Activated T-helper 2 cell treated with anti-CD3 and anti-CD28 coated beads, Interferon-gamma antibody, Interleukin-2, Interleukin-4, amounts not matched to agents 10 μg/mL and 5 μg/mL and 100 μg/mL, durations not matched to agents 14 hours and 24 hours and 36 hours (primary cell): ENCODE measurements at regions of chr12 and their contacts with region 1.

Region 1: DNA sequence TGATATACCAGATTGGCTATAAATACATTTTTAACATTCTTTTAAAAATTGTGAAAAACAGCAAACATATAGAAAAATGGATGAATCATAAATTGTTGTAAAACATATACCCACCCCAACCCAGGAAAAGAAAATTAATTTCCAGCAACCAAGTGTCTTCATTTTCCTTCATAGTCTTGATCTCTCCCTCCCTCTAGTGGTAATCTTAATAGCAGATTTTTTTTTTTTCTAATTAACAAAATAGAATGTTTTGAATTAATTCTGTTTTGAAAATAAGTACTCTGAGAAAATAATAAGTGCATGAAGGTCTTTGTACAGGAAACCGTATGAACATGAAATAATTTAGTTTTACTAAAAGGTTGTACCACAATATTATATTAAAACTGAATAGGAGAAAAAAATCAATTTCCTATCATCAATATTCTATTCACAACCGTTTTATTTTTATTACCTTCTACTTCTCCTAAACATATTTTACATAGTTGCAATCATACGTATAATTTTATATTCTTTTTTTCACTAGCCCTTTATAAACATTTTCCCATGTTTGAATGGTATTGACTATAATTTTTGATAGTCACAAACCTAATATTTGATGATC is 7.0 kb downstream of the ETNK1 start:
- DNase-seq: no peak
- H3K4me3 Mint-ChIP-seq: no peak overlapping the region
- H3K27ac Mint-ChIP-seq: no peak overlapping the region
- H3K4me1 Mint-ChIP-seq: peaks cover 51% of the 10 kb centered on the region
- H3K27me3 Mint-ChIP-seq: no peaks in the 10 kb centered on the region

Region 2: GRCh38 chr12:22529281-22530060 is 102.5 kb before region 1 on chr12:
- intact Hi-C with region 1: loop called (anchors 2 kb)
- DNase-seq: no peak
- H3K4me3 Mint-ChIP-seq: no peak overlapping the region
- H3K27ac Mint-ChIP-seq: no peak overlapping the region
- H3K4me1 Mint-ChIP-seq: peaks cover 11% of the 10 kb centered on the region
- H3K27me3 Mint-ChIP-seq: no peaks in the 10 kb centered on the region